MCF 10A (cell line): ENCODE measurements at regions of chr22 and their contacts with region 1.

Region 1: GRCh38 chr22:39932918-39933649 is 27.1 kb upstream of the TMA7B start:
- DNase-seq: peak; percentile 66
- H3K4me3 Mint-ChIP-seq: no peak overlapping the region
- H3K27ac Mint-ChIP-seq: no peak overlapping the region
- H3K4me1 Mint-ChIP-seq: no peaks in the 10 kb centered on the region
- H3K27me3 Mint-ChIP-seq: peaks cover 20% of the 10 kb centered on the region
- CTCF ChIP-seq: peak; percentile 76

Region 2: GRCh38 chr22:39622881-39623367 is 310.2 kb before region 1 on chr22:
- CTCF ChIA-PET with region 1: no interaction called
- POLR2A ChIA-PET with region 1: no interaction called
- intact Hi-C with region 1: loop called (anchors 10 kb)
- DNase-seq: peak; percentile 54
- H3K4me3 Mint-ChIP-seq: no peak overlapping the region
- H3K27ac Mint-ChIP-seq: no peak overlapping the region
- H3K4me1 Mint-ChIP-seq: no peaks in the 10 kb centered on the region
- H3K27me3 Mint-ChIP-seq: peaks cover 28% of the 10 kb centered on the region
- CTCF ChIP-seq: peak; percentile 56

Region 3: DNA sequence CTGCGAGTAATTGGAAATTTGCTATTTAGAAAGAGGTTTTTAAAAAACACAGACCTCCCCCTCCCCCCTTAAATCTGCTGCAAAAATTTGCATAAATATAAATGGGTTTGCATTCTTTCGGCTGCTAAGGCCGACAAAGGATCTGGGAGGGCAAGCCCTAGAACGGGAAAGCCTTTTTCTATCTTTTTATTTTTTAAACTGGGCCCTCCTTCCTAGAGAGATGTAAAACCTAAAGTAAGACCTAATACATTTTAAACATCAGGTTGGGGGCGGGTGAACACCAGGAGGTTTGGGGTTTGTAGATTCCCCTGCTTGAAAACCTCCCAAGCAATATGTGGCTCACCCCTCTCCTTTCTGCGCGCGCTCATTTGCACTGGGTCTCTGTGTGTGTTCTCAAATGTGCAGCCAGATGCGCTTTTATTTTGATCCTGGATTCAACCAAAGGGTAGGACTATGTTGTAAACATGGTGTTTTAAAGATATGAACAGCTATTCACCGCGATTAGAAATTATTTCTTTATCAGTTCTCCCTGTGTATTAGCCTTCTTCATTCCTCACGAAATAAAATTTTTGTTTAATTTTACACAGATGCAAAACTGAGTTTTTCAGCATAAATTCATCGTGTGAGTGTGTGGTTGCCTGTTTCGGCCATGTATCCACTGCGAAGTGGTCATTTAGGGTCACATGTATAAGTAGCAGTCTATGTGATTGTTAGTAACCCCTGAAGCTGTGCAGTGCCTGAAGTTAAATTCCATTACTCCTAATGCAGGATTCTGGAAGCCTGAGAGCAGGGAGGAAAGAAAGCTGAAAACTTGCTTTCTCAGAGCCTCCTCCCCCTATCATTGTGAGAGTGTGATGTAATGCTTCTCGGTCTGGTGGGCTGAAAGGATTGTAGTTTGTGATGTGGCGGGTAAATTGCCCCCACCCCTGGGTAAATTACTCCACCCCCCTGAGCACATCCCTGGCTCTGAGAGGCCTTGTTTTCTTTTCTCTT is 245.6 kb after region 1 on chr22:
- CTCF ChIA-PET with region 1: no interaction called
- POLR2A ChIA-PET with region 1: no interaction called
- intact Hi-C with region 1: no loop called
- DNase-seq: peak; percentile 55
- H3K4me3 Mint-ChIP-seq: peak overlapping the region; percentile 67
- H3K27ac Mint-ChIP-seq: peak overlapping the region; percentile 80
- H3K4me1 Mint-ChIP-seq: peaks cover 42% of the 10 kb centered on the region
- H3K27me3 Mint-ChIP-seq: no peaks in the 10 kb centered on the region
- CTCF ChIP-seq: no peak